CD8-positive, alpha-beta T cell (primary cell): ENCODE measurements at regions of chr20 and their contacts with region 1.

Region 1: DNA sequence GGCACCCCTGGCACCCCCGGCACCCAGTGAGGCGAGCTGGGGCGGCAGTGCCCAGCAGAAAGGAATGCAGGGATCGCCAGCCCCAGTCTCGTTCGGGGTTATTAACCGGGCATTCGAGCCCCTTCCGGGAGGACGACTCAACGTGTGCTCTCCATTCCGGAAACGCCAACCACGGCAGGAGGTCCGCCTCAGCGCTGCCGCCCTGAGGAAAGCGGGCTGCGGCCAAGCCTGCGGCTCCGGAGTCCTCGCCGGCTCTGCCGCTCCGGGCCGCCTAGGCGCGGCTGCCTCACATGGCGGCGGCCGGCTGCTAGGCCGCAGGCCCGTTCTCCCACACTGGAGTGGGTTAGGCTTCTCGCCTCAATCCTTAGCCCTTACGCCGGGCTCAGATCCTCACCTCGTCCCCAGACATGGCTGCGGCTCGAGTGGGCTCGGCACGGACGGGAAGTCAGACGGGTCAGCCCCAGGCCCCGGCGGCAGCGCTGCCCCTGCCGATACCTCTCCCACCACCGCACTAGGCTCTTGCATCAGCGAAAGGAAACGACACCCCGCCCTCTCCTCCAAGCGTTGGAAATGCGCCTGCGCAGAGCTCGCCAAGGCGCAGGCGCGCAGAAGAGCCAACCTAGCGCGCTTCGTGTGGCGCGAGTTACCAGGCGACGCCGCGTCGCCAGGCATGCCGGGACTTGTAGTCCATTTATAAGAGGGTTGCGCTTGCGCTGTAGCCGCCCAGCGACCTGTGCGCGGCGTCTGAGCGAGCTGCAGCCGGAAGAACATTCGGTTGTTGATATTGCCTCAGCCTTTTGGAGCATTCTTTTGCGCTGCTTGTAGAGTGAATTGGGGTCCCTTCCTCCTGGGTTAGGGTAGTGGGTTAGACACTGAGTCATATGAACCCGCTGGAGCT is at the start of gene EIF2S2:
- DNase-seq: peak; percentile 91 to 99 (median 95)
- ATAC-seq: peak; percentile 89
- H3K4me3 ChIP-seq: peak within 1 kb of the TSS; percentile 81 to 86
- H3K4me3 Mint-ChIP-seq: peak within 1 kb of the TSS; percentile 96
- H3K27ac ChIP-seq: peak within 1 kb of the TSS; percentile 89 to 93
- H3K27ac Mint-ChIP-seq: peak within 1 kb of the TSS; percentile 98
- H3K4me1 ChIP-seq: peaks cover 34% of the 10 kb centered on the region
- H3K4me1 Mint-ChIP-seq: peaks cover 42% of the 10 kb centered on the region
- H3K27me3 ChIP-seq: no peaks in the 10 kb centered on the region
- H3K27me3 Mint-ChIP-seq: no peaks in the 10 kb centered on the region
- CTCF ChIP-seq: no peak
- total RNA-seq, gene EIF2S2: 19.4 to 19.6 TPM

Region 2: DNA sequence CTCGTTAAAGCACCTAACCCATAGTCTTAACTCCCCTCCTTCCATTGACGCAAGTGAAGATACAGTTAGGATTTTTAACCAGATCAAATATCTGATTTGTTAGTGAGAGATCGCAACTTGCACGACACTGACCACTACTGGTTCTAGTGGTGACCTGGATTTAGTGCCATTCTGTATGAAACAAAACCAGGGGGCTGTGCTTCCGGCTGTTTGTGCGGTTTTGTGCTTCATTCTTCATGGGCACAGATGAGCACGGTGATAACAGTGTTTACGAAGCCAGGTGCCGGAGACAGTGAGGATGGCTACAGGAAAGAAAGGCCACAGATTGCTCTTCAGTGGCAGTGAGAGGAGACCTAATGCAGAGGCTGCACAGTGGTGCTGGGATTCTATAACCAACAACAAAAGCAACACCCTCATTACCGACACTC is 1602.3 kb before region 1 on chr20:
- CTCF ChIA-PET with region 1: no interaction called
- POLR2A ChIA-PET with region 1: no interaction called
- intact Hi-C with region 1: loop called in 1 of 2 experiments (anchors 5 kb)
- DNase-seq: peak; percentile 46 to 90 (median 81)
- ATAC-seq: peak; percentile 78
- H3K4me3 ChIP-seq: peak overlapping the region; percentile 51 to 77
- H3K4me3 Mint-ChIP-seq: peak overlapping the region; percentile 88
- H3K27ac ChIP-seq: peak overlapping the region; percentile 69 to 72
- H3K27ac Mint-ChIP-seq: peak overlapping the region; percentile 97
- H3K4me1 ChIP-seq: peaks cover 70% of the 10 kb centered on the region
- H3K4me1 Mint-ChIP-seq: peaks cover 77% of the 10 kb centered on the region
- H3K27me3 ChIP-seq: no peaks in the 10 kb centered on the region
- H3K27me3 Mint-ChIP-seq: no peaks in the 10 kb centered on the region
- CTCF ChIP-seq: no peak

Region 3: DNA sequence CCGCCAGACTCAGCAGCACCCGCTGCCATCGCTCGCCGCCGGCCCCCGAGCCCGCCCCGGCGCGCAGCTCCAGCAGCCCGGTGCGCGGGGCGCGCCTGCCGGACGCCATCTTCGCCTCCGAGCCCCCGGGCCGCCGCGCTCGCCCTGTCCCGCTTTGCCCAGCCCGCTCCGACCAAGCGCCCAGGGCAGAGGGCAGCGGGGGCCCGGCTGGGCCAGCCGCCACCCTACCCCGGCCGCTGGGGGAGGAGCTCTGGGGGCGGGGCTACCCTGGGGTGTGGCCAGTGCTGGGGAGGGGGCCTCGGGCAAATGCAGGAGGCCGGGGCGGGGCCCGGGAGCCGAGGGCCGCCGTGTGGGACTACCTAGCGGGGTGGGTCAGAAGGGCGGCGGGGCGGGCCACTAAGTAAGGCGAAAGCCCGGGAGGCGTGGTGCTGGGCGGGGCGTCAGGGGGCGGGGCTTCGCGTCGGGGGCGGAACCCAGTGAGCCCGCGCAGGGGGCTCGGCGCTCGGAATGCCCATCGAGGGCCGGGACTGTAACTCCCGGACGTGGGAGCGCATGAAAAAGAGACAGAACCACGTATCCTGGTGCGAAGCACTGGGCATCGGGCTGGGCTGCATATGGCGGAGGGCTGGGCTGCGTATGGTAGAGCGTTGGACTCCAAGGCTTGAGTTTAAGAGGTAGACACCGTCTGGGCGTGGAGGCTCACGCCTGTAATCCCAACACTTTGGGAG is 668.3 kb before region 1 on chr20 and contains the start of gene SNTA1:
- CTCF ChIA-PET with region 1: no interaction called
- POLR2A ChIA-PET with region 1: no interaction called
- intact Hi-C with region 1: loop called in 1 of 2 experiments (anchors 10 kb)
- DNase-seq: peak; percentile 67 to 90 (median 87)
- ATAC-seq: peak; percentile 69
- H3K4me3 ChIP-seq: peak within 1 kb of the TSS; percentile 85 to 97
- H3K4me3 Mint-ChIP-seq: peak within 1 kb of the TSS; percentile 94
- H3K27ac ChIP-seq: peak within 1 kb of the TSS; percentile 59 to 66
- H3K27ac Mint-ChIP-seq: peak within 1 kb of the TSS; percentile 92
- H3K4me1 ChIP-seq: peaks cover 16% of the 10 kb centered on the region
- H3K4me1 Mint-ChIP-seq: peaks cover 21% of the 10 kb centered on the region
- H3K27me3 ChIP-seq: no peaks in the 10 kb centered on the region
- H3K27me3 Mint-ChIP-seq: no peaks in the 10 kb centered on the region
- CTCF ChIP-seq: no peak
- total RNA-seq, gene SNTA1: 3.9 to 5.5 TPM

Region 4: DNA sequence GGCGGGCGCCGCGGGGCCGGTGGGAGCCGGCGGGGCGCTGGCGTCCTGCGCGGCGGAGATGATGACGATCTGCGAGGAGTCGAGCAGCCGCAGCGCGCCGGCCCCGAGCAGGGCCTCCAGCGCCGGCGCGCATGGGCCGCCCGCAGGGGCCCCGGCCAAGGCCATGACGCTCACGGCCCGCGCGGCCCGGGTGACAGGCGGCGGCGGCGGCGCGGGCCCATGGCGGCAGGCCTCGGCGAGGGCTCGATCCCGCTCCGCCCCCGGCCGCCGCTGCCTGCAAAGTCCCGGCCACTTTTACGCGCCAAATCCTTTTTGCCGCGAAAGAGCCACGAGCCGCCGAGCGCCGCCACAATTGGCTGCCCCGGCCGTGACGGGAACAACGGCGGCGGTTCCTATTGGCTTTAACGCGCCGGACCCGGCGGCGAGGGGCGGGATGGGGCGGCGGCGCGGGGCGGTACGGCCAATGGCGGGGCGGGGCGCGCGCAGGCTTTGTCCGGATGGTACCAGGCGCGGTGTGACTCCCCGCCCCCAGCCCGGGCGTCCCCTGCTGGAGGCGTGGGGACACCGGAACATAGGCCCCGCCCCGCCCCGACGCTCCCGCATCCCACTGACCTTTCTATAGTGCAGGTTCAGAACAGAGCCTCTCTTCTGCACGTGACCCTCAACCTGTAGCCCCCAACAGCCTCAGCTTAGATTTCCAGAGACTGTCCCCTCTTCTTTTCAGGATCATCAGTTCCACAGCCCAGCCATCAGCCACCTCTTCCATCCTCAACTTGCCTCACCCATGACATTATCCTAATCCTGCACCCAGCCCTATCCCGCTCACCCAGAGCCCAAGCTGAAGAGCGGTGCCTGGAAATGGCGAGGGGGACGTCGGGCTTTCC is 425.6 kb before region 1 on chr20 and contains the start of gene E2F1:
- CTCF ChIA-PET with region 1: no interaction called
- POLR2A ChIA-PET with region 1: no interaction called
- intact Hi-C with region 1: loop called in 1 of 2 experiments (anchors 5 kb)
- DNase-seq: peak; percentile 87 to 97 (median 93)
- ATAC-seq: peak; percentile 89
- H3K4me3 ChIP-seq: peak within 1 kb of the TSS; percentile 39
- H3K4me3 Mint-ChIP-seq: peak within 1 kb of the TSS; percentile 81
- H3K27ac ChIP-seq: peak within 1 kb of the TSS; percentile 15 to 49
- H3K27ac Mint-ChIP-seq: peak within 1 kb of the TSS; percentile 79
- H3K4me1 ChIP-seq: peaks cover 35% of the 10 kb centered on the region
- H3K4me1 Mint-ChIP-seq: peaks cover 37% of the 10 kb centered on the region
- H3K27me3 ChIP-seq: no peaks in the 10 kb centered on the region
- H3K27me3 Mint-ChIP-seq: no peaks in the 10 kb centered on the region
- CTCF ChIP-seq: no peak
- total RNA-seq, gene E2F1: 1.2 to 1.3 TPM

Region 5: GRCh38 chr20:33909331-33909921 is 202.5 kb before region 1 on chr20:
- CTCF ChIA-PET with region 1: no interaction called
- POLR2A ChIA-PET with region 1: no interaction called
- intact Hi-C with region 1: no loop called
- DNase-seq: no peak
- ATAC-seq: no peak
- H3K4me3 ChIP-seq: no peak overlapping the region
- H3K4me3 Mint-ChIP-seq: no peak overlapping the region
- H3K27ac ChIP-seq: no peak overlapping the region
- H3K27ac Mint-ChIP-seq: no peak overlapping the region
- H3K4me1 ChIP-seq: no peaks in the 10 kb centered on the region
- H3K4me1 Mint-ChIP-seq: no peaks in the 10 kb centered on the region
- H3K27me3 ChIP-seq: no peaks in the 10 kb centered on the region
- H3K27me3 Mint-ChIP-seq: peaks cover 3% of the 10 kb centered on the region
- CTCF ChIP-seq: no peak

Region 6: GRCh38 chr20:34141294-34141693 is 29.3 kb after region 1 on chr20:
- CTCF ChIA-PET with region 1: no interaction called
- POLR2A ChIA-PET with region 1: no interaction called
- intact Hi-C with region 1: no loop called
- DNase-seq: no peak
- ATAC-seq: no peak
- H3K4me3 ChIP-seq: no peak overlapping the region
- H3K4me3 Mint-ChIP-seq: no peak overlapping the region
- H3K27ac ChIP-seq: no peak overlapping the region
- H3K27ac Mint-ChIP-seq: no peak overlapping the region
- H3K4me1 ChIP-seq: no peaks in the 10 kb centered on the region
- H3K4me1 Mint-ChIP-seq: no peaks in the 10 kb centered on the region
- H3K27me3 ChIP-seq: peaks cover 0 to 3% of the 10 kb centered on the region in 2 experiments
- H3K27me3 Mint-ChIP-seq: peaks cover 9% of the 10 kb centered on the region
- CTCF ChIP-seq: no peak

Region 7: DNA sequence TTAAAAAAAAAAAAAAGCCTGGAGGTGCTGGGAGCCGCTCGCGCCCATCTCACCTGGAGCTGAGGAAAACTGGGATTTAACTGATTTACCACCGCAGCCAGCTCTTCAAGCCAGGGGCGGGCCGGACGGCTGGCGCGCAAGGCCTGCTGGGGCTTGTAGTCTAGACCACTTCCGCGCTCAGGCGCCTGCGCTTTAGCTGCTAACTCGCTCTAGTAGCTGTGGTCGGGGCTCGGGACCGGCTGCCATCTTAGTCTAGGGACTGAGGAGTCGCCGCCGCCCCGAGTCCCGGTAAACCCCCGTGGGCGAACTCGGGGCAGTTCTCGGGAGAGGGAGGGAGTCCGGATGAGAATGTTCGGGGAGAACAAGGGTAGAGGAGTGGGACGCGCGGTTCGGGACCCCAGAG is 251.1 kb after region 1 on chr20 and contains the start of gene ITCH:
- CTCF ChIA-PET with region 1: no interaction called
- POLR2A ChIA-PET with region 1: no interaction called
- intact Hi-C with region 1: loop called in 1 of 2 experiments (anchors 5 kb)
- DNase-seq: peak; percentile 80 to 96 (median 93)
- ATAC-seq: peak; percentile 99
- H3K4me3 ChIP-seq: peak within 1 kb of the TSS; percentile 92 to 93
- H3K4me3 Mint-ChIP-seq: peak within 1 kb of the TSS; percentile 99
- H3K27ac ChIP-seq: peak within 1 kb of the TSS; percentile 86 to 91
- H3K27ac Mint-ChIP-seq: peak within 1 kb of the TSS; percentile 99
- H3K4me1 ChIP-seq: peaks cover 40% of the 10 kb centered on the region
- H3K4me1 Mint-ChIP-seq: peaks cover 45% of the 10 kb centered on the region
- H3K27me3 ChIP-seq: no peaks in the 10 kb centered on the region
- H3K27me3 Mint-ChIP-seq: no peaks in the 10 kb centered on the region
- CTCF ChIP-seq: no peak
- total RNA-seq, gene ITCH: 50.4 to 55.2 TPM

Region 8: DNA sequence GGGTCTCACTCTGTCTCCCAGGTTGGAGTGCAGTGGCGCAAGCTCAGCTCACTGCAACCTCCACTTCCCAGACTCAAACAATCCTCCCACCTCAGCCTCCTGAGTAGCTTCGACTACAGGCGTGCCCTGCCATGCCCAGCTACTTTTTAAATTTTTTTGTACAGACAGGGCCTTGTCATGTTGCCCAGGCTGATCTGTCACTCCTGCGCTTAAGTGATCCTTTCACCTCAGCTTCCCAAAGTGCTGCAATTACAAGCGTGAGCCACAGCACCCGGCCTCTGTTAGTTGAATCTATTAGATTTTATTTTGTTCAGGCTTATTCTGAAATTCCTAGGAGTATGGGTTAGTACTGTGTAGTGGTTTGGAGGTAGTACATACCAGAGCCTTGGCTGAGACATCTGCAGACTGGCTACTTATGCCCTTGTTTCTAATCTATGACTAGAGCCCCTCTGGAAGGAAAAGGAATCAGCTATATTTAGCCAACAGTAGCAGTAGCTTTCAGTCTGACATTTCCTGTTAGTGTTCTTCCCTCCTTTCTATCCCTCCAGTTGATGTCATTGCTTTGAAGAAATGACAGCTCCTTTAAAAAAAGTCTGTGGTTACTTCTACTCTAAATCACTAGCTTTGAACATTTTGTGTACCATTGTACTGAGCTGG is 325.5 kb after region 1 on chr20:
- CTCF ChIA-PET with region 1: no interaction called
- POLR2A ChIA-PET with region 1: no interaction called
- intact Hi-C with region 1: no loop called
- DNase-seq: no peak
- ATAC-seq: no peak
- H3K4me3 ChIP-seq: no peak overlapping the region
- H3K4me3 Mint-ChIP-seq: no peak overlapping the region
- H3K27ac ChIP-seq: no peak overlapping the region
- H3K27ac Mint-ChIP-seq: peak overlapping the region; percentile 49
- H3K4me1 ChIP-seq: no peaks in the 10 kb centered on the region
- H3K4me1 Mint-ChIP-seq: peaks cover 11% of the 10 kb centered on the region
- H3K27me3 ChIP-seq: no peaks in the 10 kb centered on the region
- H3K27me3 Mint-ChIP-seq: no peaks in the 10 kb centered on the region
- CTCF ChIP-seq: no peak